ENCODE measurements at regions of chr13 and their contacts with region 1.

Region 1: DNA sequence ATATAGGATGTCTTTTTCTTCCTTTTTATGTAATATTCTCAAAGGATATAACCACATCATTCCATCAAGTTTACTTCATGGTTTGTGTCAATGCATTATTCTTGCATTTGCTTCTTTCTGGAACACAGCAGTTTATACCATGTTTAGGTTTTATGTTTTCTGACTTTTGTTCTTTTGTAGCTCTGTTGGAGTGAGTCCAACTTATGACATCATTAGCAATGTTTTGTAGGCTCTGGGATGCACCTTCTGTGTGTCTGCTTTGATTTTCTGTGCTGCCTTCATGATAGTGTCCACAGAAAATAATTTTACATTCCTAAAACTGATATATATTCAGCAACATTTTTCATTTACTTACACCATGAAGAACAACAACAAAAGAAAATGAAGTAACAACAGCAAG is 68.9 kb downstream of the SHISA2 start:
- DNase-seq: no peak
- H3K4me3 ChIP-seq: no peak overlapping the region
- H3K27ac ChIP-seq: no peak overlapping the region
- H3K4me1 ChIP-seq: no peaks in the 10 kb centered on the region
- H3K27me3 ChIP-seq: no peaks in the 10 kb centered on the region
- CTCF ChIP-seq: no peak
- EP300 ChIP-seq: no peak
- POLR2A ChIP-seq: no peak

Region 2: DNA sequence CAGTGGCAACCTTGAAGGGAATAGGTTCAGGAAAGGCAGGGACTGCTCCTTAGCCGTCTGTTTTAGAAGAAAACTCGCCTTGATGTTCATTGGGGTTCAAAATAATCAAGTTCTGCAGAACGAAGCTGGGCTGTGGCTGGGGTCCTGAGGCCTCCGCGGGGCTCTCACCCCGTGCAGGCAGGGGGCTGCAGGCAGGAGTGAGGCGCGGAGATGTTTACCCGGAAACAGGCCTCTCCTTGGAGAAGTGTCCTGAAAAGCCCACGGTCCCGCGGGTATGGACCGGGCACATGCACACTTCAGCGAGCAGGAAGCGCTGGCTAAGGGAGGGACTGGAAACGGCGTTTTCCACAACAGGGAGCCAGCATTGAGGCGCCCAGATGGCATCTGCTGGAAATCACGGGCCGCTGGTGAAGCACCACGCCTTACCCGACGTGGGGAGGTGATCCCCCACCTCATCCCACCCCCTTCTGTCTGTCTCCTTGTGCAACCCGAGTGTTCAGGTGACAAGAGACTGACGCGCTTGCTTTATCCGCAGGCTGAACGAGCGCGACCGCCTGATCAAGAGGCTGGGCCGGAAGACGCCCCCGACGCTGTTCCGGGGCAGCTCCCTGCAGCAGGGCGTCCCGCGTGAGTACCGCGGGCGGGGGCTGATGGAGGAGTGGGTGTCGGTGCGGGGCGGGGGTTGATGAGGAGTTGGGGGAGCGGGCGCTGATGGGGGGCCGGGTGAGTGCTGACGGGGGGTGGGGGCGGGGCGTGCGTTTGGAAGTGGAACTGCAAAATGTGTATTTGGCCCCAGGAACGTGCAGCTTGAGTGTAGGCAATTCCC is 29.3 kb after region 1 on chr13:
- intact Hi-C with region 1: loop called in 1 of 4 experiments (anchors 2 kb)
- DNase-seq: peak in 1 of 5 donors; percentile 31
- H3K4me3 ChIP-seq: no peak overlapping the region
- H3K27ac ChIP-seq: no peak overlapping the region
- H3K4me1 ChIP-seq: no peaks in the 10 kb centered on the region
- H3K27me3 ChIP-seq: no peaks in the 10 kb centered on the region
- CTCF ChIP-seq: no peak
- EP300 ChIP-seq: no peak
- POLR2A ChIP-seq: no peak